Activated CD8-positive, alpha-beta T cell treated with anti-CD3 and anti-CD28 coated beads, Interleukin-2, amount 10 ng/mL, durations not matched to agents 7 days and 5 days (primary cell): ENCODE measurements at regions of chr11 and their contacts with region 1.

Region 1: GRCh38 chr11:18721561-18722292 is 4.3 kb downstream of the IGSF22 start:
- DNase-seq: peak; percentile 66
- ATAC-seq: peak; percentile 56
- H3K4me3 Mint-ChIP-seq: peak overlapping the region; percentile 79
- H3K27ac Mint-ChIP-seq: peak overlapping the region; percentile 18
- H3K4me1 Mint-ChIP-seq: peaks cover 12% of the 10 kb centered on the region
- H3K27me3 Mint-ChIP-seq: peaks cover 15% of the 10 kb centered on the region

Region 2: GRCh38 chr11:18526521-18527296 is 195.0 kb before region 1 on chr11 and contains the start of gene TSG101:
- CTCF ChIA-PET with region 1: interaction called, 13 read pairs
- POLR2A ChIA-PET with region 1: interaction called, 6 read pairs
- DNase-seq: peak; percentile 93
- ATAC-seq: peak; percentile 81
- H3K4me3 Mint-ChIP-seq: peak within 1 kb of the TSS; percentile 99
- H3K27ac Mint-ChIP-seq: peak within 1 kb of the TSS; percentile 99
- H3K4me1 Mint-ChIP-seq: peaks cover 33% of the 10 kb centered on the region
- H3K27me3 Mint-ChIP-seq: no peaks in the 10 kb centered on the region
- total RNA-seq, gene TSG101: 33.5 to 48.7 TPM

Region 3: GRCh38 chr11:18540207-18541009 is 181.3 kb before region 1 on chr11:
- CTCF ChIA-PET with region 1: interaction called, 39 read pairs
- POLR2A ChIA-PET with region 1: no interaction called
- DNase-seq: no peak
- ATAC-seq: peak; percentile 81
- H3K4me3 Mint-ChIP-seq: no peak overlapping the region
- H3K27ac Mint-ChIP-seq: no peak overlapping the region
- H3K4me1 Mint-ChIP-seq: no peaks in the 10 kb centered on the region
- H3K27me3 Mint-ChIP-seq: no peaks in the 10 kb centered on the region

Region 4: DNA sequence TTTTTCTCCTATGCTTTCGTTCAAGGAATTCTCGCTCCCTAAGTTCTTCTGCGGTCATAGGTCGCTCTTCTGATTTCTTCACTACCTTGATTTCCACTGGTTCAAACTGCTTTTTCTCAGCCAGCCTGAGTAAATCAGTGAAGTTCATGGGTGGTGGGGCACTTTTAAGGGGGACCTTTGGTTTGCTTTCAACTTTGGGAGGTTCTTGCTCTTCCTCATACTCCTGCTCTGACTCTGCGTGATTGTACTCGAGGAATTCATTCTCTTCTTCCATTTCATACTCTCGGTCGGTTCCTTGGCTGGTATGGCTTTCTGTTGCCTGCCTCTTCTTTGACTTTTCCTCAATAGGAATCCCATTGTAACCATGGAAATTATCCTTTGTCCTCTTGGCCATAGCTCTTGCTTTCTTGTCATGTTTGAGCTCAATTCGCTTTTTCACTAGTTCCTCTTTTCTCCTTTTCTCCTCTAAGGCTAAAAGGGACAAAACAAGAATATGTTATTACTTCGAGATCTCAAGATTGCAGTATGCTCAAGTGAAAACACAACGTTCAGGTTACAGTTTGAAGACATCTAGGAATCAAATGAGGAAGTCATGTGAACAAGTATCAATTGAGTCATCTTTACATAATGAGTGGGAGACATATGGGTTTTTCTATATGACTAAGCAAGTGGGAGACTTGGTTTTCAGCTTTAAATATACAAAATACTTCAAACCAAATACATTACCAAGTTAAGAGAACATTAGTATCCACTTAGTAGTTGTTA is 105.9 kb before region 1 on chr11:
- CTCF ChIA-PET with region 1: interaction called, 10 read pairs
- POLR2A ChIA-PET with region 1: no interaction called
- DNase-seq: no peak
- ATAC-seq: peak; percentile 47
- H3K4me3 Mint-ChIP-seq: no peak overlapping the region
- H3K27ac Mint-ChIP-seq: no peak overlapping the region
- H3K4me1 Mint-ChIP-seq: peaks cover 43% of the 10 kb centered on the region
- H3K27me3 Mint-ChIP-seq: no peaks in the 10 kb centered on the region

Region 5: GRCh38 chr11:18706330-18707243 is 15.1 kb before region 1 on chr11:
- CTCF ChIA-PET with region 1: interaction called, 35 read pairs
- POLR2A ChIA-PET with region 1: interaction called, 3 read pairs
- DNase-seq: peak; percentile 49
- ATAC-seq: peak; percentile 74
- H3K4me3 Mint-ChIP-seq: peak overlapping the region; percentile 67
- H3K27ac Mint-ChIP-seq: no peak overlapping the region
- H3K4me1 Mint-ChIP-seq: peaks cover 16% of the 10 kb centered on the region
- H3K27me3 Mint-ChIP-seq: peaks cover 32% of the 10 kb centered on the region

Region 6: DNA sequence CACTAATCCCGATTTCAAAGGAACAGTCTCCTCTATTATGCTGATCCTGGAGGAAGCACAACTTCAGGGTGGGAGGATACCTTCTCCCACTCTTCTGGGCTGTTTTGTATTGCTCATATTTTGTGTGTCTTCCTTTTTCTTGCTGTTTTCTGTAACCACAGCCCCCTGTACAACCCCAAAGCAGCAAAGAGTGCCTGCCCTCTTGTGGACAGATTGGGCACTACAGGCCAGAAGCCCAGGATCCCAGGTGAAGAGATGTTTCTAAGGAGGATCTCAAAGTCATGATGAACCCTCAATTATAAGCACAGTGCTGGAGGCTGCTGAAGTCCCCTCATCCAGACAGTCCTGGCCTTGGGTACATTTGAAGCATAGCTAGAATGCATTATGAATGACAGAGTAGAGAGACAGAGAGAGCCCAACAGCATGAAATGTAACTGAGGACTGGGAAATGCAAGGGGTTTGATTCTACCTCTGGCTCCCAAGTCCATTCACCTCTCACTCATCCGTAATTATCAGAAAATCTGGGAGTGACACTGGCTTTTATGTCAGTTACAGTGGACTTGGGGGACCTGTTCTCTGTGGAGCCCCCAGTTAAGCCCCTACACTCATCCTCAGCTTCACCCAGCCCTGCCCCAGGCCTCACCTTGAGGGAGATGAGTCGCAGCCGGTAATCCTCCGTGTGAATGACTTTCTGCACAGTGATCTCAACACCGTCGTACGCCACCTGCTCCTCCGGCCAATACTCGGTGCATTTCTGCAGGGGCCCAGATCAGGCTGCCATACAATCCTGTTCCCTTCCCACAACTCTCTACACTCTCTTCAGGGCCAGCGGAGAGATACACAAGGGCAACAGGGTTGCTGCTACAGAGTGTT is 10.5 kb after region 1 on chr11:
- CTCF ChIA-PET with region 1: interaction called, 42 read pairs
- POLR2A ChIA-PET with region 1: no interaction called
- DNase-seq: peak; percentile 76
- ATAC-seq: peak; percentile 62
- H3K4me3 Mint-ChIP-seq: no peak overlapping the region
- H3K27ac Mint-ChIP-seq: no peak overlapping the region
- H3K4me1 Mint-ChIP-seq: peaks cover 8% of the 10 kb centered on the region
- H3K27me3 Mint-ChIP-seq: peaks cover 2% of the 10 kb centered on the region

Region 7: GRCh38 chr11:18768472-18768901 is 46.8 kb after region 1 on chr11:
- CTCF ChIA-PET with region 1: interaction called, 19 read pairs
- POLR2A ChIA-PET with region 1: no interaction called
- DNase-seq: no peak
- ATAC-seq: peak; percentile 32
- H3K4me3 Mint-ChIP-seq: no peak overlapping the region
- H3K27ac Mint-ChIP-seq: no peak overlapping the region
- H3K4me1 Mint-ChIP-seq: peaks cover 29% of the 10 kb centered on the region
- H3K27me3 Mint-ChIP-seq: peaks cover 18% of the 10 kb centered on the region

Region 8: DNA sequence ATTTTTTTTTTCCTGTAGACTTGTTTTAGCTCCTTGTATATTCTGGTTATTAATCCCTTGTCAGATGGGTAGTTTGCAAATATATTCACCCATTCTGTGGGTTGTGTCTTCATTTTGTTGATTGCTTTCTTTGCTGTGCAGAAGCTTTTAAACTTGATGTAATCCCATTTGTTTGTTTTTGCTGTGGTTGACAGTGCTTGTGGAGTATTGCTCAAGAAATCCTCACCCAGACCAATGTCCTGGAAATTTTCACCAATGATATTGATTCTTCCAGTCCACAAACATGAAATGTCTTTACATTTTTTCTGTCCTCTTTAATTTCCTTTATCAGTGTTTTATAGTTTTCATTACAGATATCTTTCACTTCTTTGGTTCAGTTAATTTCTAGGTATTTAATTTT is 273.1 kb after region 1 on chr11:
- CTCF ChIA-PET with region 1: no interaction called
- POLR2A ChIA-PET with region 1: no interaction called
- DNase-seq: no peak
- ATAC-seq: no peak
- H3K4me3 Mint-ChIP-seq: no peak overlapping the region
- H3K27ac Mint-ChIP-seq: no peak overlapping the region
- H3K4me1 Mint-ChIP-seq: no peaks in the 10 kb centered on the region
- H3K27me3 Mint-ChIP-seq: peaks cover 3% of the 10 kb centered on the region